T-cell (primary cell): ENCODE measurements at regions of chr3 and their contacts with region 1.

Region 1: DNA sequence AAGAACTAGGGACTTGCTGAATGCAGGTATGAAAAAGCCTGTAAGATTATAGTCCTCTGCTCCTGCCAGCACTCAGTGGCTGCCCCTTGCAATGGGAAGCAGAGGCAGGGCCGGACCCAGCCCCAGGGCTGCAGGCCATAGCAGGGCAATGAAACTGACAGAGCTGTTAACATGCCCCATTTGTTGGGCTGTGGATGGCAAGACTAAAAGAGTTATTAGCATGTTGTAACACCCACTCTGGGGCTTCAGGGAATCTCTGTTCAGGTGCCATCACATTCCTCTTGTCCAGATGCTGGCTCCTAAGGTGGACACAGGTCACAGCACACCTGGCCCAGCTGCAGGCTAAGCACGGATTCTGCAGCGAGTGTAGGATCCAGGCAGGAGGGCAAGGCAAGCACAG is 7.4 kb upstream of the OR5H2 start:
- DNase-seq: no peak
- ATAC-seq: no peak
- H3K4me3 ChIP-seq: no peak overlapping the region
- H3K4me3 Mint-ChIP-seq: no peak overlapping the region
- H3K27ac ChIP-seq: no peak overlapping the region
- H3K27ac Mint-ChIP-seq: no peak overlapping the region
- H3K4me1 ChIP-seq: no peaks in the 10 kb centered on the region
- H3K4me1 Mint-ChIP-seq: peaks cover 2 to 5% (median 3%) of the 10 kb centered on the region in 3 donors
- H3K27me3 ChIP-seq: peaks cover 0 to 7% of the 10 kb centered on the region in 2 experiments
- H3K27me3 Mint-ChIP-seq: peaks cover 3 to 8% of the 10 kb centered on the region in 2 donors

Region 2: GRCh38 chr3:98259707-98260106 is 15.2 kb before region 1 on chr3:
- CTCF ChIA-PET with region 1: no interaction called
- POLR2A ChIA-PET with region 1: no interaction called
- DNase-seq: no peak
- ATAC-seq: no peak
- H3K4me3 ChIP-seq: no peak overlapping the region
- H3K4me3 Mint-ChIP-seq: no peak overlapping the region
- H3K27ac ChIP-seq: no peak overlapping the region
- H3K27ac Mint-ChIP-seq: no peak overlapping the region
- H3K4me1 ChIP-seq: no peaks in the 10 kb centered on the region
- H3K4me1 Mint-ChIP-seq: no peaks in the 10 kb centered on the region
- H3K27me3 ChIP-seq: no peaks in the 10 kb centered on the region
- H3K27me3 Mint-ChIP-seq: peaks cover 0 to 3% of the 10 kb centered on the region in 2 donors

Region 3: DNA sequence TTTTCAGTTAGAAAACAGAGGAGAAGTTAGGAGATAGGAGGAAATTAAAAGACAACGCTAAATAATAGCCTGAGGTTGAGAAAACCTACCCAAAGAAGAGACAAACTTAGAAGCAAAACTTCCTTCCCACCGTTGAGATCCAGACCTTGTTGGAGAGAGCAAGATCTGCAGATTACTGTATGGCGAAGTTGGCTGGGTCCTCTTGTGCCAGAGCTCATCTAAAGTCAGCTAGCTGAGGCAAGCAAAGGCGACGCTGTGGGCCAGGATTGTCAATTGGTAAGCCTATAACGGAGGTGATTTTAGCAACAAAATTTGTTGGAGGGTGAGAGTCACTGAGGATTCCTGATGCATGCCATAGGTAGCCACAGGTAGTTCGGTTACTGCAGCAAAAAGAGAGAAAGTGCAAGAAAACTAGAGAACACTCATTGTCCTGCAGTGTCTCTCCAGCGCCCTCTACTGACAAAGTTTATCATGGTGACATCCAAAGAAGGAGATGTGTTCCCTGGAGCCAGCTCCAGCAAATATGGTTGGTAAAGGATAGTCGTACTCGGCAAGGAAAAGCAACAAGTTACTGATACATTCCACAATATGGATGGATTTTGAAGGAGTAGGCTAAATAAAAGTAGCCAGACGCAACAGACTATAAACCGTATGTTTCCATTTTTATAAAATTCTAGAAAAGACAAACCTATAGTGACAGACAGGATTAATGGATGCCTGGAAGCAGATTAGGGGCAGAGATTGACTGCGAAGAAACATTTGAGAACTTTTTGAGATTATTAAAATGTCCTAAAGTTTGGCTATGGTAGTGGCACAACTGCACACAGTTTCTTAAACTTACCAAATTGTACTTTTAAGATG is 69.0 kb after region 1 on chr3:
- CTCF ChIA-PET with region 1: no interaction called
- POLR2A ChIA-PET with region 1: no interaction called
- DNase-seq: peak in 9 of 35 experiments; percentile 4 to 63 (median 13)
- ATAC-seq: no peak
- H3K4me3 ChIP-seq: no peak overlapping the region
- H3K4me3 Mint-ChIP-seq: no peak overlapping the region
- H3K27ac ChIP-seq: no peak overlapping the region
- H3K27ac Mint-ChIP-seq: no peak overlapping the region
- H3K4me1 ChIP-seq: no peaks in the 10 kb centered on the region
- H3K4me1 Mint-ChIP-seq: peaks cover 0 to 6% (median 4%) of the 10 kb centered on the region in 3 donors
- H3K27me3 ChIP-seq: no peaks in the 10 kb centered on the region
- H3K27me3 Mint-ChIP-seq: peaks cover 0 to 5% of the 10 kb centered on the region in 2 donors

Region 4: GRCh38 chr3:98744283-98744682 is 469.4 kb after region 1 on chr3:
- CTCF ChIA-PET with region 1: no interaction called
- POLR2A ChIA-PET with region 1: no interaction called
- DNase-seq: no peak
- ATAC-seq: no peak
- H3K4me3 ChIP-seq: no peak overlapping the region
- H3K4me3 Mint-ChIP-seq: no peak overlapping the region
- H3K27ac ChIP-seq: no peak overlapping the region
- H3K27ac Mint-ChIP-seq: no peak overlapping the region
- H3K4me1 ChIP-seq: no peaks in the 10 kb centered on the region
- H3K4me1 Mint-ChIP-seq: no peaks in the 10 kb centered on the region
- H3K27me3 ChIP-seq: peaks cover 0 to 4% of the 10 kb centered on the region in 2 experiments
- H3K27me3 Mint-ChIP-seq: peaks cover 20 to 22% of the 10 kb centered on the region in 2 donors

Region 5: DNA sequence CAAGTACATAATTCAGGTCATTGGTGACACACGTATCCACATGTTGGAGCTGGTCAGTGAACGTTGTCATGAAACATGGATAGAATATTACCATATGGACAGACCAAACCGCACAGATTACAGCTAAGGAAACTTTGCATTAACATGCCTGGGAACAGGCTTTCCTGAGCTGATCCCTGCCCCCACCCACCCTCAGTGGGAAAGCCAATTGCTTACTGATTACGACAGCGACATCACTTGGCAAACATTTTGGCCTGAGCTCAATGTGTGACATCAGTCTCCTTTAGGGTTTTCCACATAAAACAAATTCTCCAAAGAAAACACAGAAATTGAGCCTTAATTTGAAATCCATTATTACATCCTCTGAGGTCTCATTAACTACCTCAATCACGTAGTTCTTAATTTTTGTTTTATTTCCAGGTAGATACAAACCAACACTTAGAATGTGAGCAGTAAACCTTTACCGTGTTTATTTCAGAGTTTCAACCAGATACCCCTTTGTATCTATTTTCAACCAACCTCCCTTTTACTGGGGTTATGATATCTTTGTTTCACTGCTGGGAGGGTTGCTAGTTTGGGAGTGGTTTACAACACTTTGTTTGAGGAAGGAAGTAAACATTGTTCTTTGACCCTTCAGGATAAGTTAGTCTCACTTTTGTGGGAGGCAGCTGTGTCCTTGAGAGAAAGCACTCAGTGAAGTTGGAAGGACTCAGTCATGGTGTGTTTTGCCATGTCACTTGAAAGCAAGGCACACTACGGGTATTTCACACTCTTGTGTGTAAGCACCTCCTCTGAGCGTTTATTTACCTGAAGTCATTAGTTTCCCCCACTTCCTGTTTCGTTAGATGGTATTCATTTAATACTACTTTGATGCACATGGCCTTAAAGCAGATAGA is 1645.8 kb after region 1 on chr3:
- CTCF ChIA-PET with region 1: interaction called in 1 of 2 experiments, 11 read pairs
- POLR2A ChIA-PET with region 1: no interaction called
- DNase-seq: no peak
- ATAC-seq: no peak
- H3K4me3 ChIP-seq: no peak overlapping the region
- H3K4me3 Mint-ChIP-seq: no peak overlapping the region
- H3K27ac ChIP-seq: no peak overlapping the region
- H3K27ac Mint-ChIP-seq: no peak overlapping the region
- H3K4me1 ChIP-seq: no peaks in the 10 kb centered on the region
- H3K4me1 Mint-ChIP-seq: peaks cover 0 to 6% (median 5%) of the 10 kb centered on the region in 3 donors
- H3K27me3 ChIP-seq: no peaks in the 10 kb centered on the region
- H3K27me3 Mint-ChIP-seq: no peaks in the 10 kb centered on the region

Region 6: DNA sequence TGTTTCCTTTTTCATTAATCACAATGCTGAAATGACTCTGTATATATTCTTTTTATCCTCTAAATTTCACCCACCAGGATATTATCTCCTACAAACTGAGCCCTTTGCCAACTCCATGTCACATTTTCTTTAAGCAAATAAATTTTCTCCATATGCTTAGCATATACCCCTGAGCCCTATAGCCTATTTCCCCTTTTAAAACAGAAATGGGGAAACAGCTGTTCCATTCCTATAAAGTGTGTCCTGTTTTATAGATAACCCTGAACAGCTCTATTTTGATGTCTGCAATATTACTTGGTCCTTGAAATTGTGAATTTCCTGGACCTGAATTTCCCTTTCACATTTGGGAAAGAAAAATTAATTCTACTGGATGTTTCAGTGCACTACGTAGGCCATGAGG is 1855.0 kb after region 1 on chr3:
- CTCF ChIA-PET with region 1: no interaction called
- POLR2A ChIA-PET with region 1: no interaction called
- DNase-seq: no peak
- ATAC-seq: no peak
- H3K4me3 ChIP-seq: no peak overlapping the region
- H3K4me3 Mint-ChIP-seq: no peak overlapping the region
- H3K27ac ChIP-seq: no peak overlapping the region
- H3K27ac Mint-ChIP-seq: no peak overlapping the region
- H3K4me1 ChIP-seq: no peaks in the 10 kb centered on the region
- H3K4me1 Mint-ChIP-seq: no peaks in the 10 kb centered on the region
- H3K27me3 ChIP-seq: no peaks in the 10 kb centered on the region
- H3K27me3 Mint-ChIP-seq: no peaks in the 10 kb centered on the region